ENCODE measurements at regions of chr14 and their contacts with region 1.

Region 1: DNA sequence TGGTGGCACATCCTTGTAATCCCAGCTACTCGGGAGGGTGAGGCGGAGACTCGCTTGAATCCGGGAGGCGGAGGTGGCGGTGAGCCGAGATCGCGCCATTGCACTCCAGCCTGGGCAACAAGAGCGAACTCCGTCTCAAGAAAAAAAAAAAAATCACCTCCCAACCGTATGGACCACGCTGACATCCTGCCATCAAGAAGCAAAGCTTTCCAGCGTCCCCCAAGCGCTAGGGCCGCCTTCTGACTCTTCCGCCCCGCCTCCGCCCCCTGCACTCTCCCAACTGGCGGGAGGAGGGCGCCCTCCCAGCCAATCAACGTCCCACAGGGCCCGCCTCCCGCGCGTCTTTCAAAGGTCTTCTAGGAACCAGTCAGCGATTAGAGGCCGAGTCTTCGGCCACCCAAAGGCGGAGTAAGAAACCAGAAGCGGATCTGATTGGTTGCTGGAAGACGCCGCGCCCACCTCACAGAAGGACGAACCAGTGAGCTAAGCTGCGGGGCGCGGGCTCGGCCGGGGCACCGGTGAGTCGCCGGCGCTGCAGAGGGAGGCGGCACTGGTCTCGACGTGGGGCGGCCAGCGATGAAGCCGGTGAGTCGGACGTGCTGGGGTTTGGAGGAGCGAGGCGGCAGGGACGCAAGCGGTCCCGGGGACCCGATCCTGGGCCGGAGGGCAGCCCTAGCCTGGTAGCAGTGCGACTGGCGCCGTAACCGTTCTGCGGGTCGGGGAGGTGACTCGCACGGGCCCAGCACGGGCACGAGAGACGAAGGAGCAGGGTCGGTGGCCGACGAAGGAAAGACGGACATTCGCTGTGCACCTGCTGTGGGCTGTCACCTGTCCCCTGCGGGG is at the start of gene CDKN3:
- DNase-seq: peak; percentile 97
- ATAC-seq: peak; percentile 97
- H3K4me3 Mint-ChIP-seq: peak within 1 kb of the TSS; percentile 81
- H3K27ac Mint-ChIP-seq: no peak within 1 kb of the TSS
- H3K4me1 Mint-ChIP-seq: peaks cover 31% of the 10 kb centered on the region
- H3K27me3 Mint-ChIP-seq: peaks cover 11% of the 10 kb centered on the region; the same call in 1 of the 2 replicates
- CTCF ChIP-seq: 0 out of 2 replicates have a peak, but pooled peaks have one; percentile 28
- total RNA-seq, gene CDKN3: 55.4 to 62.0 TPM (median 57.0 TPM) in 3 replicates

Region 2: GRCh38 chr14:54420013-54420809 is 23.5 kb after region 1 on chr14:
- CTCF ChIA-PET with region 1: interaction called, 21 read pairs
- POLR2A ChIA-PET with region 1: interaction called, 5 read pairs
- DNase-seq: peak; percentile 59
- ATAC-seq: peak; percentile 95
- H3K4me3 Mint-ChIP-seq: no peak overlapping the region
- H3K27ac Mint-ChIP-seq: no peak overlapping the region; the same call in 1 of the 2 replicates
- H3K4me1 Mint-ChIP-seq: peaks cover 5% of the 10 kb centered on the region
- H3K27me3 Mint-ChIP-seq: no peaks in the 10 kb centered on the region
- CTCF ChIP-seq: peak; percentile 47; the same call in 1 of the 2 replicates